ENCODE measurements at regions of chr17 and their contacts with region 1.

Region 1: DNA sequence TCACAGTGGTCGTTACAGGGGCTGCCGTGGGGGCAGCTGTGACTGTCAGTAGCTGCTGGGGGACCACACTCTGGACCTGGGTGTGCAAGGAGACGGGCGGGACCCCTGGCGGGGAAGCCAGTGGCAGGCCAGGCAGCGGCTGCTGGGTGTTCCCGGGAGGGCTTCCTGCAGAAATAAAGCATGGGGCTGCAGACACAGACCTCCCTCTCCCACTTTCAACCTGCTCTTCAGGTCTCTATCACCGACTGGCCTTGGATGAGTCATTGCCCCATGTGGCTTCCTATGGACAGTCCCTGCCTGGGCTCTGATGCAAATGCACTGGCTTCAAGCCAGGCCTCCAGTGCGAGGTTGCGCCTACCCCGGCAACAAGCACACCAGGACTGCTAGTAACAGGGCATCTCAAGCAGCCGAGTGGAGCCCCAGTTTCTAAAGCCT is 17.2 kb downstream of the SREBF1 start:
- DNase-seq: peak; percentile 64 to 89 (median 78)
- ATAC-seq: no peak
- H3K4me3 ChIP-seq: no peak overlapping the region
- H3K27ac ChIP-seq: peak overlapping the region in 2 of 4 donors; percentile 18 to 25
- H3K4me1 ChIP-seq: peaks cover 58% of the 10 kb centered on the region
- H3K27me3 ChIP-seq: no peaks in the 10 kb centered on the region
- CTCF ChIP-seq: no peak
- POLR2A ChIP-seq: no peak

Region 2: GRCh38 chr17:17859909-17860765 is 40.6 kb after region 1 on chr17:
- intact Hi-C with region 1: loop called (anchors 5 kb)
- DNase-seq: peak; percentile 72 to 74 (median 73)
- ATAC-seq: peak; percentile 91
- H3K4me3 ChIP-seq: no peak overlapping the region
- H3K27ac ChIP-seq: no peak overlapping the region
- H3K4me1 ChIP-seq: peaks cover 10% of the 10 kb centered on the region
- H3K27me3 ChIP-seq: no peaks in the 10 kb centered on the region
- CTCF ChIP-seq: peak; percentile 85 to 97 (median 95)
- POLR2A ChIP-seq: no peak

Region 3: DNA sequence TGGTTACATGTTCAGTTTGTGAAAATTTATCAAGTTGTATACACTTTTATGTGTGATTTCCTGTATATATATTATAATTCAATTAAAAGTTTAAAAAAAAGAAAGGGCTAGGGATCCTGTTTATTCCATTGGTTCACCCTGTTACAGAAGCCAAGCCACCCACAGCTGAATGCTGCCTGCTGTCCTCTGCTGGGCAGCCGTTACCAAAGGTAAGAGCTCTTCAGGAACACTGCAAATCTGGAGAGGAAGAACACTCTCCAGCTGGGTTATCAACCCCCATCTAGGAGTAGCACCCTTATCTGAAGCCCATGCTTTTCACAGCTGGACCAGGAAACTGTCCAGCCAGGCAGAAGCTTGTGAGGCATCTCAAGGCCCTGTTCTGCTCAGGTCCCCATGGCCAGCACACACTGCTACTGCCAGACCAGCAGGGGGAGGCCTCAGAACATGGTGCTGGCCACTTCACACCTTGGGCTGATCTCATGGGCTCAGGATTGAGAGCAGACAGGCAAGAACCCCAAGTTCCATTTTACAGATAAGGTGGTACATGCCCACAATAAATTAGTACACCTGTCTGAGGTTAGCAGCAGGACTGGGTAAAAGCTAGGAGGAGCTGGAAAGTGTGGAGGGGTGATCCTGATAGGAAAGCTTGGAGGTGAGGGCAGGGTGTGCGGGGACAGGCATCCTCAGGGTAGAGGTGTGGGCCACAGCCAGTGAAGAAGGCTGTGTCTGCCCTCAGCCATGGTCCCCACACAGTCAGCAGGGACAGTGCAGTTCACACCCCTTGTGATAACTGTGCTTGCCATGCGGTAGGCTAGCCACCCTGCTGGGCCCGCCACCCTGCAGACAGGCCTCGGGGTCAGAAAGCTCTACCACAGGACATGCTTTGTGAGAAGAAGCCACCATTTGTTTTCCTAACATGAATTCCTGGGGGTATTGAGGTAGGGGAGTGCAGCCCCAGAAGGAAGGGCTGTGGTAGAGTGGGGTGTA is 71.5 kb after region 1 on chr17:
- intact Hi-C with region 1: no loop called
- DNase-seq: peak; percentile 39 to 64 (median 57)
- ATAC-seq: peak; percentile 66
- H3K4me3 ChIP-seq: no peak overlapping the region
- H3K27ac ChIP-seq: no peak overlapping the region
- H3K4me1 ChIP-seq: no peaks in the 10 kb centered on the region
- H3K27me3 ChIP-seq: no peaks in the 10 kb centered on the region
- CTCF ChIP-seq: peak in 6 of 7 experiments; percentile 26 to 68 (median 54)
- POLR2A ChIP-seq: no peak

Region 4: GRCh38 chr17:18045691-18046090 is 226.1 kb after region 1 on chr17:
- intact Hi-C with region 1: no loop called
- DNase-seq: no peak
- ATAC-seq: no peak
- H3K4me3 ChIP-seq: no peak overlapping the region
- H3K27ac ChIP-seq: no peak overlapping the region
- H3K4me1 ChIP-seq: peaks cover 29% of the 10 kb centered on the region
- H3K27me3 ChIP-seq: no peaks in the 10 kb centered on the region
- CTCF ChIP-seq: no peak
- POLR2A ChIP-seq: no peak

Region 5: DNA sequence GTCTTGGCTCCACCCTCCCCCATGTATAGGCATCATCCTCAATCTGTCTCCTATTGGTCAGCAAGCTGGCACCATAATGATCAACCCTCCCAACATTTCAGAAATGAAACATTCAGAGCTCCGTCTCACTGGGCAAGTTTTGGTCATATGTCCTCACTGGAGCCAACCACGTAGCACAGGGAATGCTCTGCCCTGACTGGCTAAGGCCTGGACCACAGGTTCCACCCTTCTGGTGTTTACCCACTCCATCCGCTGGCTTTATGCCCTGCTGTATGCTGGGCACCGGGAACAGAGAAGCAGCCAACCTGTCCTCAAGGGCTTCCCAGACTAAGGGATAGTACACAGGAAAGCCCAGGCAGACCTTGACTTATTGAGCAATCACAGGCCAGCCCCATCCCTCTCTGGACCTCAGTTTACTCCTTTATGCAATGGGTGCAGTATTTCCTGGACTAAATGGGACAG is 309.5 kb after region 1 on chr17:
- intact Hi-C with region 1: no loop called
- DNase-seq: peak in 3 of 4 donors; percentile 22 to 60 (median 22)
- ATAC-seq: no peak
- H3K4me3 ChIP-seq: no peak overlapping the region
- H3K27ac ChIP-seq: no peak overlapping the region
- H3K4me1 ChIP-seq: no peaks in the 10 kb centered on the region
- H3K27me3 ChIP-seq: no peaks in the 10 kb centered on the region
- CTCF ChIP-seq: no peak
- POLR2A ChIP-seq: no peak

Measured in body of pancreas (tissue), 4 donors.